Sigmoid colon (tissue), 7 donors: ENCODE measurements at regions of chr2 and their contacts with region 1.

Region 1: GRCh38 chr2:177604271-177605065 is 211.9 kb downstream of the AGPS start:
- DNase-seq: no peak
- H3K4me3 ChIP-seq: no peak overlapping the region
- H3K27ac ChIP-seq: peak overlapping the region; percentile 9 to 45 (median 31)
- H3K4me1 ChIP-seq: peaks cover 0 to 15% (median under 1%) of the 10 kb centered on the region in 4 donors
- H3K27me3 ChIP-seq: no peaks in the 10 kb centered on the region
- CTCF ChIP-seq: peak; percentile 38 to 68 (median 56)
- EP300 ChIP-seq: no peak
- POLR2A ChIP-seq: no peak

Region 2: DNA sequence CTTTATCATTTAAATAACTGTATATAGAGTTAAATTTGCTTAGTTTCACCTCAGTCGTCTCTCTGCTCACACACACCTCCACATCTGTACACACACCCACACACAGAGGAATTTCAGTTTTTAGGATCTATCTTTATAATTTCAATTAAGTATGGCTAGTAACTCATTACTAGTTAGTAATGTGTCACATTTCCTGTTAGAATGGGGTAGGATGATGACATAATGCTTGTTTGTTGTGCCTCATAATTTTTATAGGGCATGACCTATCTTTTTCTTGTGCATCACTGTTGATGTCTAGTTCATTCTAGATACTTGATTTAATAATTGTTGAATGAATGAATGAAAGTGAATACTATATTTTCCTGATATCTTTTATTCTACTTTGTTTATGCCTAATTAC is 103.3 kb before region 1 on chr2:
- intact Hi-C with region 1: no loop called
- DNase-seq: no peak
- H3K4me3 ChIP-seq: no peak overlapping the region
- H3K27ac ChIP-seq: no peak overlapping the region
- H3K4me1 ChIP-seq: peaks cover 0 to 9% (median 0%) of the 10 kb centered on the region in 4 donors
- H3K27me3 ChIP-seq: no peaks in the 10 kb centered on the region
- CTCF ChIP-seq: no peak
- EP300 ChIP-seq: no peak
- POLR2A ChIP-seq: no peak

Region 3: GRCh38 chr2:177692828-177693269 is 88.4 kb after region 1 on chr2:
- intact Hi-C with region 1: no loop called
- DNase-seq: no peak
- H3K4me3 ChIP-seq: no peak overlapping the region
- H3K27ac ChIP-seq: no peak overlapping the region
- H3K4me1 ChIP-seq: no peaks in the 10 kb centered on the region
- H3K27me3 ChIP-seq: no peaks in the 10 kb centered on the region
- CTCF ChIP-seq: no peak
- EP300 ChIP-seq: no peak
- POLR2A ChIP-seq: no peak

Region 4: DNA sequence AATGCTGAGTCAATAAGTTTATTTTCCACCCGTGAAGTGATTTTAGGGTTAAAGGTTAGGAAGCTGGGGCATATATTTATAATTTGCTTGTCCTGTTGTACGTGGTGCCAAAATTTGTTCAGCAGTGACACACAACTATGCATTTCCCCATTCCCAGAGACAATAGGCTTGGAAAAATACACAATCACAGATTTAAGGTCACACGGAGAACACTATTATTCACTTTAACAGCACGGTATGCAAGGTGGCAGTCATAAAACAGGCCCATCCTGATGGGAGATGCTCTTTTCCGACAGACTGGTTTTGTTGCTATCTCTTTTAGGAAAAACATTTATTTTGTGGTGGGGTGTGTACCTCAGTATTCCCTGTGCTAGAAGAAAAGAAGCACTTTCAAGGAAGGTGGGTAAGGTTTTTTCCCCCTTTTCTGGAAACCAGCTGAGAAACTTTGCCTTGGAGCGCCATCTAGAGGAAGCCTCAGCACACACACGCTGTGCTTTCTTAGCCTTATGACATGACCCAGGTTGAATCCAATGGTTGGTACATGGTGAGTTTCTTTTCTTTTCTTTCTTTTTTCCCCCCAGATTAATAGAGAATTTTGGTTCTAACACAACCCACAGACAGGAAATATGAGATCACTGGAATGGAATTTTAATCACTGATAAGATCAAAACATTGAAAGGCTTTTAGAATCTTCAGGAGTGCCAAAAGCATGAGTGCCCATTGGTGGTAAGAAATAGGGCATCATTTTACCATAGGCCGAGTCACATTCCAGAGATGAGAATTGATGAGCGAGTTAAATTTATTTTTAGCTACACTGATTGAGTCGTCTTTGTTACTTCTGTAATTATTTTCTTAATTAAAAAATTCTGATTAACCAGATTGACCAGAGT is 120.2 kb after region 1 on chr2:
- intact Hi-C with region 1: loop called (anchors 5 kb)
- DNase-seq: peak; percentile 65
- H3K4me3 ChIP-seq: no peak overlapping the region
- H3K27ac ChIP-seq: no peak overlapping the region
- H3K4me1 ChIP-seq: peaks cover 0 to 6% (median 0%) of the 10 kb centered on the region in 4 donors
- H3K27me3 ChIP-seq: no peaks in the 10 kb centered on the region
- CTCF ChIP-seq: peak; percentile 66 to 82 (median 74)
- EP300 ChIP-seq: no peak
- POLR2A ChIP-seq: no peak

Region 5: DNA sequence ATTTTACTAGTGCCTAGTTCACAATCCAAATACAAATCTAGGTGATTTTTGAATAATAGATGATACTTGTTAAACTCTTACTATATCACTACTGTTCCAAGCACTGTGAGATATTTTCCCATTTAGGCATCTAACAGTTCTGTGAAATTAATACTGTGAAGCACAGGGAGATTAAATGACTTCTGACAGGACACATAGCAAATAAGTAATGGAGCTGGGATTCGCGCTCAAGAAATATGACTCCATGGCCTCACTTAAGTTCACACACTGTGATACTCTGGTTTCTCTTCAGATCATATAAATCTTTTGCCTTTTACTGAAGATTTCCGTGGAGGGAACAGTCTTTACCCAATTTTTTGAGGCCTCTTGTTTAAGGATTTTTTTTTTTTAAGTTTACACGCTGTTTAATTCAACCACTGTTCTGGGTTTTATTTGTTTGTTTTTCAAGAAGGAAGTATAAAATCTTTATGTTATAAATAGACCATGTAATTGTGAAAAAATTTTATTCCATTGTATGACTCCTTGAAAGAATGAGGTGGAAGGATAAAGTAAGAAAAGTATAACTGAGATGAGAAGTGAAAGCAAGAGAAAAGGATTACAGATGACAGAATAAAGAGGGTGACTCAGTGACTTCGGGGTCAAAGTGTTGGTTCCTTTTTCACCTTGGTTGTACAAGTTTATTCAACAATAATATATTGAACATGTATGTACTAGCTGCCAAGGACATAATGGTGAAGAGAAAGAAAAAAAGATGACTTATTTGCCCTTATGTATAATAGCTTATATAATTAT is 538.0 kb after region 1 on chr2:
- intact Hi-C with region 1: no loop called
- DNase-seq: no peak
- H3K4me3 ChIP-seq: no peak overlapping the region
- H3K27ac ChIP-seq: no peak overlapping the region
- H3K4me1 ChIP-seq: no peaks in the 10 kb centered on the region
- H3K27me3 ChIP-seq: no peaks in the 10 kb centered on the region
- CTCF ChIP-seq: no peak
- EP300 ChIP-seq: no peak
- POLR2A ChIP-seq: no peak